ENCODE measurements at regions of chr22 and their contacts with region 1.

Region 1: GRCh38 chr22:20568989-20569769 is 61.8 kb downstream of the MED15 start:
- DNase-seq: no peak
- H3K4me3 ChIP-seq: no peak overlapping the region
- H3K27ac ChIP-seq: peak overlapping the region; percentile 66 to 76
- H3K4me1 ChIP-seq: peaks cover 9 to 22% of the 10 kb centered on the region in 2 experiments; a peak in 3 of 4 replicates
- H3K27me3 ChIP-seq: no peaks in the 10 kb centered on the region
- CTCF ChIP-seq: no peak
- EP300 ChIP-seq: no peak
- RAD21 ChIP-seq: no peak

Region 2: DNA sequence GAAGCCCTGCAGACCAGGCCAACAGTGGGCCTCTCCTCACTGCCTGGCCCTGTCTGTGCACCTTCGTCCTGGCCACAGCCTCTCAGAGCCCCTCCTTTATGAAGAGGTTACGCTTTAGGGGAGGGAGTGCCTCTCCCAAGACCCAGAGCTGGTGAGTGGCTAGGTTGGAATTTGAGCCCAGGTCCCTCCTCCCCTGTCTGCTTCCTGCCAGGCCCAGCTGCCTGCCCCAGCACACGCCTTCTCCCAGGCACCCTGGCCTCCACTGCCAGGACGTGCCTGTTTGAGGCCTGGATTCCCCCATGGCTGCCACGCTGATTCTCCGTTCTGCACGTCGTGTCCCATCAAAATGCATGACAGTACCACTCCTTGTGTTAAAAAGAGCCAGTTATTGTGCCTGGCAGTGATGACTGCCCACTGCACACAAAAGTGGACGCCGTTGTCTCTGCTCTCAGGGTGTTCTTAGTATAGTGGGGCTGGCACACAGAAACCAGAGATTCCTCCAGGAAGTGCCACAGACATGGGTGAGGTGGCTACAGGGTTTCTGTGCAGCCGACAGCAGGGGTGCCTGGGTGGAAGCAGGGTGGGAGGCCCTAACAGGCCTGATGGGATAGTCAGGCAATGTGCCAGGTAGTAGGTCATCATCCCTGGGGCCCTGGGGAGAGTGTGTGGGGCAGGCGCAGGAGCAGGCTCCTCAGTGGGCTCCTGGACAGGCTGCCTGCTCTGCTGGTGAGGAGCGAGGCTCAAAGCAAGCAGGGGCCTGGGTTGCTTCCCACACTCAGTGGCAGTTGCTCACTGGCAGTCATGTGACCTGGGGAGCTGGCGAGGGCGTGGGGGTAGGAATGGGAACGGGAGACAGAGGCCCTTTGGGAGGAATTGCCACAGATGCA is 37.6 kb before region 1 on chr22:
- CTCF ChIA-PET with region 1: interaction called, 32 read pairs
- POLR2A ChIA-PET with region 1: no interaction called
- DNase-seq: peak; percentile 78
- H3K4me3 ChIP-seq: no peak overlapping the region
- H3K27ac ChIP-seq: peak overlapping the region; percentile 95 to 96
- H3K4me1 ChIP-seq: peaks cover 36 to 68% of the 10 kb centered on the region in 2 experiments
- H3K27me3 ChIP-seq: no peaks in the 10 kb centered on the region
- CTCF ChIP-seq: no peak
- EP300 ChIP-seq: no peak; a peak in 1 of 4 replicates
- RAD21 ChIP-seq: no peak

Region 3: GRCh38 chr22:20545681-20546521 is 23.3 kb before region 1 on chr22:
- CTCF ChIA-PET with region 1: interaction called, 103 read pairs
- POLR2A ChIA-PET with region 1: no interaction called
- DNase-seq: no peak
- H3K4me3 ChIP-seq: no peak overlapping the region
- H3K27ac ChIP-seq: no peak overlapping the region; a peak in 1 of 4 replicates
- H3K4me1 ChIP-seq: peaks cover 23 to 26% of the 10 kb centered on the region in 2 experiments; a peak in 3 of 4 replicates
- H3K27me3 ChIP-seq: no peaks in the 10 kb centered on the region
- CTCF ChIP-seq: no peak
- EP300 ChIP-seq: no peak
- RAD21 ChIP-seq: no peak

Region 4: DNA sequence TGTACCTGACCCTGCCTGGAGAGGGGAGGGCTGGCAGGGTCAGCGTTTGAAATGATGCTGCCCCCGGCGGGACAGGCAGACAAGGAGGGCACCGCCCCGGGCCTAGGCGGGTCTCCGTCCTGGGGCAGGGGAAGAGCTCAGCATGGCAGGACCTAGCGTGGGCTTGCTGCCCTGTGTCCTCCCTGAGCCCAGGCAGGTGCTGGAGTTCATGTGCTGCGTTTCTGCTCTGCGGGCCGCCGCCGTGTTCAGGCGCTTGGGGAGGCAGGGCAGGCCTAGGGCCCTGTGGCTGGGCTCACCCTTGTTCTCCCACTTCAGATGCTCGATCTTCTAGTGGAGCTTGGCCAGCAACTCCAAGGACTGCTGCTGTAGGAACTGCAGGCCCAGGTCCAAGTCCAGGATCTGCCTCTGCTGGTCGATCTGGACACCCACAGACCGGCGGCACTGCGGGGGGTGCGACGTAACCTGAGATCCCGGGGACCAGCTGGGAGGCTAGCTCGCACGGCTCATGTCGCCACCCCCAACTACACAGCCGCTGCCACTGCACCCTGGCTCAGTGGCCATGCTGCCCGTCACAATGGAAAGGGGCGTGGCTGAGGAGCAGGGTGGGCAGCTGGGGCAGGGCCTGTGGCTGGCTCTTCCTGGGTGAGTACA is 22.6 kb after region 1 on chr22:
- CTCF ChIA-PET with region 1: interaction called, 180 read pairs
- POLR2A ChIA-PET with region 1: no interaction called
- DNase-seq: no peak
- H3K4me3 ChIP-seq: no peak overlapping the region
- H3K27ac ChIP-seq: no peak overlapping the region
- H3K4me1 ChIP-seq: peaks cover 0 to 5% of the 10 kb centered on the region in 2 experiments; a peak in 1 of 4 replicates
- H3K27me3 ChIP-seq: no peaks in the 10 kb centered on the region
- CTCF ChIP-seq: no peak
- EP300 ChIP-seq: no peak
- RAD21 ChIP-seq: no peak

Region 5: DNA sequence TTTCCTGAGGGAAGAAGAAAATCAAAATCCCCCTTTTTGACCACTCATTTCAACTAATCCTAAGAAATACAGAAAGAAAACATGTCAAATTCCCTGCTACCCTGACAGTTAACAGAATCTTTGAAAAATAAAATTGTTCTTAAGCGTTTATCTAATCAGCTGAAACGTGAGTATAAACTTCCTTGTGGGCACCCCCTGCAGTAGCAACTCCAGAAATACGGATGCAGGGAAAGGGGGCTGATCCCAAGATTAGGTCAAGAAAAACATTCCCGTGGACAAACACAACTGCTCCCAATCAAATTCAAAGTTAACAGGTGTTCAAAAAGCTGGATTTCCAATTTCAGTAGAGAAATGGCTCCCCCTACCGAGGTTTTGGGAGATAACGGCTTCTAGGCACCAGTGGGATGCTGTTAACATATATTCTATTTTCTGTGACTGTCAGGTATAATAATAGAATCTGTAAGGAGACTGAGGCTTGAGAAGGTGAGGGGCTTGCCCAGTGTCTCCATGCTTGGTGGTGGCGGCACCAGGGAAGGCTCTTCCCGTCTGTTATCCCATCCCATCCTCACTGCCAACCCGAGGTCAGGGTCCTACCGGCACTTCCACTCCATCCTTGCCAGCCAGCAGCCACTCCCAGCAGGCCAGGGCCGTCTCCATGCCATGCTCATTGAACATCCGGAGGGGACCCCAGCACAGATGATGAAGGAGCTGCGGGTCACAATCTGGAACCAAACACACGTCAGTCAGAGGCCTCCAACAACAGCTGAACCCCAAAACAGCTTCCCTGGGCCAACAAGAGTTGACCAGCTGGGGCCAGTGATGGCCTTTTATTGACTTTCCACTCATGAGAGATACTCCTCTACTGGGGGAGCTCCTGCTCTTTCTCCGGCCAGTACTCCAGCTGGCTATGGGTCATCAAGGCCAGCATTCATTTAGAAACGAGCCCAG is 172.7 kb after region 1 on chr22:
- CTCF ChIA-PET with region 1: interaction called, 10 read pairs
- POLR2A ChIA-PET with region 1: no interaction called
- DNase-seq: peak; percentile 66
- H3K4me3 ChIP-seq: no peak overlapping the region; a peak in 1 of 4 replicates
- H3K27ac ChIP-seq: no peak overlapping the region; a peak in 1 of 4 replicates
- H3K4me1 ChIP-seq: no peaks in the 10 kb centered on the region; a peak in 2 of 4 replicates
- H3K27me3 ChIP-seq: no peaks in the 10 kb centered on the region
- CTCF ChIP-seq: peak; percentile 56
- EP300 ChIP-seq: no peak
- RAD21 ChIP-seq: peak; percentile 69

Measured in SK-N-SH (cell line).